AG04450 (cell line): ENCODE measurements at regions of chr17 and their contacts with region 1.

Region 1: DNA sequence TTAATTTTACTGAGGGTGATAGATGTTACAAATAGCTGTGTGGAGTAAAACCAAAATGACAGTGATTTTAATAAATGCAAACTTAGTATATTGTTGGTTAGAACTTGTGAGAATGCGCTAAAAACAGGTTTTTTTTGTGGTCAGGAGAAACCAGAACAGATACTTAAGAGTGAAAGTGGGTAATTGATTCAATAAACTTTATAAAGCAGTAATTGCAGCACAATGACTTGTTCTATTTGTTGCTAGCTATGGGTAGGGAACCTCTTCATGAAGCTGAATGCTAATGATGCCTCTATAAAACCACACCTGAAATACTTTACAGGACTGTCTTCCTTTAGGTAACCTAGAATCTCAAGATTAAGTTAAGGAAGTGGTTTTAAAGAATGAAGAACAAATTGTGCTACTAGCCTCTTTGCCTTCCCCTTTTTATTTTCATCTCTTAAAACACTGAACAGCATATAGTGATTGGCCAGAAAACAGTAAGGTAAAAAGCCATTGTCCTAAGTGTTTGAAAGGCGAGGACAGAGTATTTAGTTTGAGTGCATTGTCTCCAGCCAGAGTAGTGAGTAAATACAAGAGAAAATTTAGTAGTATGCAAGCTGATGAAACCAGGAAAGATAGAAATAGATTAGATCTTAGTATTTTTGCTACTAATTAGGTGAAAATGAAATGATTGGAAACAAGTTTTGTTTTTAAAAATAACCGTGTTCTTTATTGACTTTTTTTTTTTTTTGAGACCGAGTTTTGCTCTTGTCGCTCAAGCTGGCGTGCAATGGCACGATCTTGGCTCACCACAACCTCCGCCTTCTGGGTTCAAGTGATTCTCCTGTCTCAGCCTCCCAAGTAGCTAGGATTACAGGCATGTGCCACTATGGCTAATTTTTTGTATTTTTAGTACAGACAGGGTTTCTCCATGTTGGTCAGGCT is 6.0 kb downstream of the GGNBP2 start:
- DNase-seq: no peak
- H3K4me3 ChIP-seq: no peak overlapping the region
- H3K27ac ChIP-seq: no peak overlapping the region
- H3K27me3 ChIP-seq: no peaks in the 10 kb centered on the region
- CTCF ChIP-seq: no peak

Region 2: GRCh38 chr17:36524428-36524876 is 26.3 kb before region 1 on chr17:
- CTCF ChIA-PET with region 1: no interaction called
- POLR2A ChIA-PET with region 1: no interaction called
- DNase-seq: no peak
- H3K4me3 ChIP-seq: no peak overlapping the region
- H3K27ac ChIP-seq: no peak overlapping the region
- H3K27me3 ChIP-seq: no peaks in the 10 kb centered on the region
- CTCF ChIP-seq: no peak

Region 3: DNA sequence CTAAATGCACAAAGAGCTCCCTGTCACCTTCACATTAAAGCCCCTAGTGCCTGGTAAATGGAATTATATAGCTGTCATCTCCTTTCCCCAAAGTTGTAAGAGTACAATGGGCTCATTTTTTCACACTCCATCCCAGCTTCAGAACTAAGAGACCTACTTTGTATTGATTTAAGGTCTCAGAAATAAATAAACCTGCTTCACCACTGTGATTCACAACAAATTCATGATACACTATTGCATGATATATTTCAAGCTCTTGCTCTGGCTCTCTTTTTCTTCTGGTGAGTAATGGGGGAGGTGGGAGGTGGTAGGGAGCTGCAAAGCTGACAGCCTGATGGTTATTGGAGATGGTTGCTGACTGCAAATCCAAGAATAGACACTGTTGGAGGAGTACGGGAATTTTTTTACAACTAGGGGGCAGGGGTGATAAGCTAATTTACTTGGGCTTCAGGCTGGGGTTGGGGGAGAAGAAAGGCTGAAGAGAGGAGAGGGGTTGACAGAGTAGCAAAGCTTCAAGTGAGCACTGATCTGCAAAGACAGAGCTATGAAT is 587.9 kb after region 1 on chr17:
- CTCF ChIA-PET with region 1: no interaction called
- POLR2A ChIA-PET with region 1: interaction called, 13 read pairs
- DNase-seq: no peak
- H3K4me3 ChIP-seq: no peak overlapping the region
- H3K27ac ChIP-seq: no peak overlapping the region
- H3K27me3 ChIP-seq: no peaks in the 10 kb centered on the region
- CTCF ChIP-seq: no peak